Esophagus squamous epithelium (tissue), 5 donors: ENCODE measurements at regions of chr1 and their contacts with region 1.

Region 1: GRCh38 chr1:223531742-223532341 is 133.7 kb downstream of the CAPN8 start:
- DNase-seq: no peak
- H3K4me3 ChIP-seq: no peak overlapping the region
- H3K27ac ChIP-seq: no peak overlapping the region
- H3K4me1 ChIP-seq: no peaks in the 10 kb centered on the region
- H3K27me3 ChIP-seq: no peaks in the 10 kb centered on the region
- CTCF ChIP-seq: peak in 5 of 6 experiments; percentile 41 to 67 (median 54)
- POLR2A ChIP-seq: no peak

Region 2: DNA sequence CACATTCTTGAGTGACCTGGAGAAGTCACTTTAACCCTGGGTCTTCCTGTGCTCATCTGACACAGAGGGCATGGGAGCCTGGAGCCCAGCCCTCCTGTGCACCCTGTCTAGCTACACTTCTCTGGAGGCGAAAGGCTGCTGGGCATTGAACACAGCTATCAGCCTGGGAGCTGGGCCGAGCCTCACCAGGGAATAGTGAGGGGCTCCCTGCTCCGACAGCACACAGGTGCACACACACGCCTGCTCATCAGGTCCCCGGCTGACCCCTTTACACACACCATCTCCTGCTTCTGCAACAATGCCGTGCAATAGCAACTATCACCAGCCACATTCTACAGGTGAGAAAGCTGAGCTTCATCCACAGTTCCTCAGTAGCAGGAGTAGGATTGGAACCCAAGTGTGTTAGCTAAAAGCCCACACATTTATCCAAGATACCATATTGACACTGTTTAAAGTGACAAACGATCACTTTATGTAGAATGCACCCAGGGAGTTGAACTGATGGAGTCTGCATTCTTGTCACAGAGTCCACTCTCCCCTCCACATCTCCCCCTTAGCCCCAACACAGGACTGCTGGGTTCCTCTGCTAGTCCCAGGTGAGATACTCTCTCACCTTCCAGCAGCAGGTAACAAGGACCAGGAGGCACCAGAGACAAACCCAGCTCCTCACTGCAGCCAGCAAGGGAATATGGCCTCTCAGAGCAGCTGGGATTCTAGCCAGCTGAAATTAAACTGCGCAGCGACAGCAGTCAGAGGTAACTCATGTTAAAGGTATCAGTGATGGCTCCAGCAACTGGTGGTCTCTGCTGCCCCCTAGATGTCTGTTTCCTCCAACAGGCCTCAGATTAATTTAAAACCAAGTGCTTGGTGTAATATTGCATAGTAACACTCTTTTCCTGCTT is 152.0 kb after region 1 on chr1:
- intact Hi-C with region 1: loop called (anchors 5 kb)
- DNase-seq: no peak
- H3K4me3 ChIP-seq: no peak overlapping the region
- H3K27ac ChIP-seq: no peak overlapping the region
- H3K4me1 ChIP-seq: peaks cover 0 to 4% (median 0%) of the 10 kb centered on the region in 3 donors
- H3K27me3 ChIP-seq: peaks cover 0 to 9% (median 0%) of the 10 kb centered on the region in 4 donors
- CTCF ChIP-seq: peak in 5 of 6 experiments; percentile 57 to 72 (median 61)
- POLR2A ChIP-seq: no peak